Breast epithelium (tissue), 4 donors: ENCODE measurements at regions of chr14 and their contacts with region 1.

Region 1: DNA sequence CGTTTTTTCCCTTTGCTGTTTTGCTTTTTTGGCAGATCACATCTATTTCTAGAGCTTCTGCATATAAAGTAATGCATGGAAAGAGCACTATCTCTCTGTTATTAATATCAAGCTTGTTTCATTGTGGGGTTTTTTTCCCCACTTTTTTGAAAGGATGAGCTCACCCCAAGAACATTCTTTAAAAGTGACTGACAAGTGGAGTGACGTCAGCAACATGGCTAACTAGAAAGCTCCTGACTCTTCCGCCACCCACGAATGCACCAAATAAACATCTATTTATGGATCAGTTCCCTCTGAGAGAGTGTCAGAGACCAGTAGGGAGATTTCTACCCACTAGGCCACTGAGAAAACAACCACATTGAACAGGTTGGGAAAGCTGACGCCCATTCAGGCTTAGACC is 445.4 kb downstream of the GALC start:
- DNase-seq: no peak
- H3K4me3 ChIP-seq: no peak overlapping the region
- H3K27ac ChIP-seq: no peak overlapping the region
- H3K4me1 ChIP-seq: no peaks in the 10 kb centered on the region
- H3K27me3 ChIP-seq: no peaks in the 10 kb centered on the region
- CTCF ChIP-seq: no peak
- POLR2A ChIP-seq: no peak

Region 2: DNA sequence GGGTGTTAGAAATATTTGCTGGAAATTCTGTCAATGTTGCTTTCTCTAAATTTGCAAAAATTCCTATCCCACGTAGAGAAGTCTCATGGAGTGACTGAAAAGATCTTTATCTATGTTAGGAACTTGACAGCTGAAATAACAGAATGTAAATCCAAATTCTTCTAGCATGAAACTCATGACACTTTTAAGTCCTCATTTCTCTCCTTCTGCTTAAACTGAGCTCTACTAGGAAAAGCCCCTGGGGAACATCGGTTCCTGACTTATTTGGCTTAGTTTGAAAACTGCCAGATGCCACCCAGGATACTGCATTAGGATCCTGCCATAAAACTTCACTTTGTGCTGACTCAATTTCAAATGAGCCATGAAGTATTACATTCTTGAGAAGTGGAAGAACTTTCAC is 19.5 kb after region 1 on chr14:
- intact Hi-C with region 1: loop called (anchors 2 kb)
- DNase-seq: no peak
- H3K4me3 ChIP-seq: no peak overlapping the region
- H3K27ac ChIP-seq: no peak overlapping the region
- H3K4me1 ChIP-seq: no peaks in the 10 kb centered on the region
- H3K27me3 ChIP-seq: no peaks in the 10 kb centered on the region
- CTCF ChIP-seq: no peak
- POLR2A ChIP-seq: no peak

Region 3: GRCh38 chr14:88824314-88825077 is 1277.0 kb after region 1 on chr14 and contains the start of gene TTC8:
- intact Hi-C with region 1: no loop called
- DNase-seq: peak; percentile 81 to 86
- H3K4me3 ChIP-seq: peak within 1 kb of the TSS; percentile 63 to 95 (median 65)
- H3K27ac ChIP-seq: peak within 1 kb of the TSS; percentile 87 to 89
- H3K4me1 ChIP-seq: no peaks in the 10 kb centered on the region
- H3K27me3 ChIP-seq: no peaks in the 10 kb centered on the region
- CTCF ChIP-seq: peak in 1 of 3 donors; percentile 11
- POLR2A ChIP-seq: peak; percentile 55
- total RNA-seq, gene TTC8: 18.9 to 58.2 (median 44.6) TPM